G401 (cell line): ENCODE measurements at regions of chr12 and their contacts with region 1.

Region 1: GRCh38 chr12:1972856-1973317 is 31.4 kb downstream of the DCP1B start:
- DNase-seq: peak; percentile 57

Region 2: DNA sequence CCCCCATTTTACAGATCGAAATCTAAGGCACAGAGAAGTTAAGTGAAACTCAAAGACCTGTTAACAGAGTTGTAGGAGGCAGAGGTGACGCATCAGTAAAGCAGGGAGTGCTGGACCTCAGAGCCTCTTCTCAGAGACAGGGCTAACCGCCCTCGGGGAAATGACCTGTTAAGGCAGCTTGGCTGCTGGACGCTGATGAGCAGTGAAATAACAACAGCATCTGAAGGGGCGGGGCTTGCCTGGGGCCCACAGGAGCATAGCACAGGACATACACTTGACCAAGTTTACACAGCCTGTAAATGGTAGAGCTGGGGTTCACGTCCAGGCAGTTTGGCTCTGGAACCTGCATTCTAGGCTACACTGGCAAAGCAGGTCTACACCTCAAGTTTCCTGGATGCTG is 113.2 kb before region 1 on chr12:
- in situ Hi-C with region 1: no loop called
- DNase-seq: no peak

Region 3: DNA sequence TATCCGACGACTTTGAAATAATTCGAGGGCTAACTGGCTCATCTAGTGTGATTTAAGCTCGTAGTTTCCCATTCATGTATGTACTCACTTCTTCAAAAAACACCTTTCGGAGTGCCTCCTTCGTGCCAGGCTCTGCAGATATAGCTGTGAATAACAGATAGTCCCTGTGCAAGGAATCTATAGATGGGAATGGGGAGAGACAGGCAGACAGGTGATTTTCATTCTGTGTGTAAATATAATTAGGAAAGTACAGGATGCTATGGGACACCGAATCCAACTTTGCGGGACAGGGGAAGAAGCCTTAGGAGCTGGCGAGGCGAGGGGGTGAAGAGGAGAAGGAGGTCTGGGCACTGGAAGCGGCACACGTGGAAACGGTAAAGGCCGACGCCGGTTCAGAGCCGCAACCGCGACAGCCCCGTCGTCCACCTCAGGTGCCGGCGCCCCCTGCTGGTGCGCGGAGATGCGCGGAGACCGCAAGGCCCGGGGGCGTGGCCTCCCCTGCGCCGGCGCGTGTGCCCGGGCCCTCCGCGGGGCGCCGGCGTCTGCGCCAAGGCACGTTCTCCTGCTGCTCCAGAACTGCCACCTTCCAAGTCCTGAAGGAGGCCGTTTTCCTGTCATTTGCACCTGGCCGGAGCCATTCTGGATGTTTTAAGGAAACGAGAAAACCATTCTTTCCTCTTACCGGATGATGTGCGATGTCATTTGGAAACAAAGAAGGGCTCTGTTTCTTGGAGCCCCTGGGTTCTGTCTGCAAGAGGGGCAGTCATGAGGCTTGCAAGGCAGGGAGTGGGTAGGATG is 61.9 kb after region 1 on chr12:
- in situ Hi-C with region 1: loop called (anchors 5 kb)
- DNase-seq: peak; percentile 81